ENCODE measurements at regions of chr12 and their contacts with region 1.

Region 1: DNA sequence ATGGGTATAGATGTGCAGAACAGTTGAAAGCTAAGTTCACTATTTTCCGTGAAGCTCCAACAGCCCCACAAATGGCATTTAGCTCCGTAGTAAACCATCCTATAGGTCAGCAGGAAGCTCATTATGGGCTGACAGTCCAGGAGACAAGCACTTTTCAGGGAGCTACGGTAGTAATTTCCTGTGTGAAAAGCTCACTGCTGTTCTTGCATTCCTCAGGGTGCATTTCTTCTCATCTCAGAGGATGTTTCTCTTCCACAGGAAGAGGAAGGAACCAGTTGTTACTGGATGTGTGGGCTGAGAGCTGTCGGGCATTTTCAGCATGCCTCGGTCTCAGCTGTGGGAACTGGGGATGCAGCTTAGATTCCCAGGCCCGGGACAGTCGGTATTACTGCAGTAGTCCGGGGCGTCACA is 72.8 kb downstream of the GALNT4 start:
- DNase-seq: peak in 1 of 2 donors; percentile 29
- H3K4me3 ChIP-seq: peak overlapping the region in 1 of 3 donors; percentile 37
- H3K27ac ChIP-seq: peak overlapping the region; percentile 12 to 85
- H3K4me1 ChIP-seq: no peaks in the 10 kb centered on the region
- H3K27me3 ChIP-seq: no peaks in the 10 kb centered on the region
- CTCF ChIP-seq: no peak
- POLR2A ChIP-seq: no peak

Region 2: GRCh38 chr12:89051065-89051677 is 400.7 kb before region 1 on chr12:
- intact Hi-C with region 1: loop called (anchors 10 kb)
- DNase-seq: no peak
- H3K4me3 ChIP-seq: no peak overlapping the region
- H3K27ac ChIP-seq: no peak overlapping the region
- H3K4me1 ChIP-seq: no peaks in the 10 kb centered on the region
- H3K27me3 ChIP-seq: no peaks in the 10 kb centered on the region
- CTCF ChIP-seq: peak; percentile 66 to 93 (median 91)
- POLR2A ChIP-seq: no peak

Region 3: DNA sequence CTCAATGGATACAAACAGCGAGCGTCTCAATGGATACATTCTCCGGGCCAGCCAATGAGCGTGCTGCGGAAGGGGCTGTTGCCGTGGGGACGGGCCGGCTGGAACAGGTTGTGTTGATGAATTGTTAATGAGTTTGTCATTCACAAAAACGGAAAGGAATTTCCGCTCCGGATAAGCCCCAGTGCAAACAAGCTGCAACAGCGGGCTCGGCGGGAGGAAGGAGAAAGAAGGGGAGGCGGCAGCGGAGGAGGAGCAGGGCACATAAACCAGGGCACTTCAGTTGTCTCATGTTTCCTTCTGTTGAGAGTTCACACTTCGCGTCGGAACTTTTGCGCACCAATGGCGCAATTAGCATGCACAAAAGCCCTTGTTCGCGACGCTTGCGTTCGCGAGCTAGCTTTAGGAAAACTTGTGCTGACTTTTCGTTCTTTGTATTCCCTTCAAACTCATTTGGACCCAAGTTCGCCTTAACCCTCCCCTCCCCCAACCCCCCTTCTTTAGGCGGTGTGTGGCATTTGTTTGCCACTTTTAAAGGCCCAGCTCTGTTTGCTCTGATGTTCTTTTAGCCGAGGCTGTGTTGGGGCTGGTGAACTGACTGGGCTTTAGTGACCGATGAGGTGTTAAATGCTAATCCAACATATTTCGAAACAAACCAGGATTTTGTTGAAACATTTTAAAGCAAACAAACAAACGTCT is 99.2 kb before region 1 on chr12 and contains the start of gene DUSP6:
- intact Hi-C with region 1: loop called (anchors 10 kb)
- DNase-seq: peak; percentile 93 to 97
- H3K4me3 ChIP-seq: peak within 1 kb of the TSS; percentile 85 to 93 (median 91)
- H3K27ac ChIP-seq: peak within 1 kb of the TSS; percentile 98 to 99
- H3K4me1 ChIP-seq: peaks cover 0 to 10% of the 10 kb centered on the region in 2 donors
- H3K27me3 ChIP-seq: no peaks in the 10 kb centered on the region
- CTCF ChIP-seq: no peak
- POLR2A ChIP-seq: peak; percentile 95
- total RNA-seq, gene DUSP6: 53.8 to 97.5 (median 88.8) TPM

Region 4: GRCh38 chr12:89414851-89415250 is 37.0 kb before region 1 on chr12:
- intact Hi-C with region 1: no loop called
- DNase-seq: no peak
- H3K4me3 ChIP-seq: no peak overlapping the region
- H3K27ac ChIP-seq: no peak overlapping the region
- H3K4me1 ChIP-seq: no peaks in the 10 kb centered on the region
- H3K27me3 ChIP-seq: no peaks in the 10 kb centered on the region
- CTCF ChIP-seq: no peak
- POLR2A ChIP-seq: no peak

Measured in breast epithelium (tissue), 4 donors.